MCF 10A (cell line): ENCODE measurements at regions of chr3 and their contacts with region 1.

Region 1: GRCh38 chr3:97821810-97822775 is at the start of gene CRYBG3:
- DNase-seq: peak; percentile 78
- H3K4me3 Mint-ChIP-seq: peak within 1 kb of the TSS; percentile 91
- H3K27ac Mint-ChIP-seq: peak within 1 kb of the TSS; percentile 81
- H3K4me1 Mint-ChIP-seq: peaks cover 22% of the 10 kb centered on the region
- H3K27me3 Mint-ChIP-seq: no peaks in the 10 kb centered on the region
- CTCF ChIP-seq: no peak
- total RNA-seq, gene CRYBG3: 7.2 and 10.7 TPM in 2 replicates

Region 2: DNA sequence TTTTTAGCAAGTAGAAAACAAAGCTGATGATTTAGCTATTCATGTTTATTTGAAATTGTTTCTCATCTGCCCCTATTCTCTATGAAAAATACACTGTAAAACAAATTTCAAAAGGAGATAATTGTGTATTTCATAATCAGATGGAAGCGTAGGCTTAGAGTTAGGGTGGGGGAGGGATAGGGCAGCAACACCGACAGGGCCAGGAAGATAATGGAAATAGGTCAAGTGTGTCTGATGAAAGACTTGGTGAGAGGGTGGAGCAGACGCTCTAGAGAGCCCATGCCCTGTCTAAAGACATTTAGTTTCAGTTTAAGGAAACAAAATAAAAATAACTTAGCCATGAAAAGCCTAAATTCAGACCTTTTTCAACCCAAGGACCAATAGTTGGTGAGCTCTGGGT is 109.2 kb before region 1 on chr3:
- CTCF ChIA-PET with region 1: no interaction called
- POLR2A ChIA-PET with region 1: no interaction called
- intact Hi-C with region 1: no loop called
- DNase-seq: no peak
- H3K4me3 Mint-ChIP-seq: no peak overlapping the region
- H3K27ac Mint-ChIP-seq: no peak overlapping the region
- H3K4me1 Mint-ChIP-seq: peaks cover 6% of the 10 kb centered on the region
- H3K27me3 Mint-ChIP-seq: peaks cover 11% of the 10 kb centered on the region
- CTCF ChIP-seq: no peak

Region 3: DNA sequence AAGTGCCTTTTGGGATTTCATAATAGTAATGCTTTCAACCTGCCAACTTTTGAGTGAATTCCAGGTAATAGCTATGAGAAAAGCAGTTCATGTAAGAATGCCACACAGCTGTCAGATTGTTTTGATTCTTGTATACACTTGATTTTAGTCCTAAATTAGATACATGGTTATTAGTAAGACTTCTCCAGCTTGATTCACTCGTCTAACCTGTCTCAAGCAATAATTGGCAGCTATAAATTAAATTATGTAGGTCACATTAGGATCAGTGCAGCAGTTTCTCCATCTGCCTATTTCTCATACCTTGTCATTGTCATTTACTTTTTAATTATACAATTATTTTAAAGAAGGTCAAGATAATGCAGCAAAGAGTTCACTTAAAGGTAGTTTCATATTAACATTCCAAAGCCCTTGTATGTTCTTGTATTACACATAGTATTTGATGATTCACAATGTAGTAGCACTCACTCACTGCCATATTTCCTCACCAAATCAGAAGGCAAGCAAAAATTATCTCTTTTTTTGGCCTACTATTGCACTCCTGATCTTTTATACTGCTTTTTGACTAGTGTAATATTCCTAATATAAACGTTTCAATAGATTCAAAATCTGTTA is 11.2 kb before region 1 on chr3:
- CTCF ChIA-PET with region 1: no interaction called
- POLR2A ChIA-PET with region 1: interaction called, 33 read pairs
- intact Hi-C with region 1: no loop called
- DNase-seq: peak; percentile 20
- H3K4me3 Mint-ChIP-seq: no peak overlapping the region
- H3K27ac Mint-ChIP-seq: no peak overlapping the region
- H3K4me1 Mint-ChIP-seq: peaks cover 13% of the 10 kb centered on the region
- H3K27me3 Mint-ChIP-seq: no peaks in the 10 kb centered on the region
- CTCF ChIP-seq: no peak

Region 4: DNA sequence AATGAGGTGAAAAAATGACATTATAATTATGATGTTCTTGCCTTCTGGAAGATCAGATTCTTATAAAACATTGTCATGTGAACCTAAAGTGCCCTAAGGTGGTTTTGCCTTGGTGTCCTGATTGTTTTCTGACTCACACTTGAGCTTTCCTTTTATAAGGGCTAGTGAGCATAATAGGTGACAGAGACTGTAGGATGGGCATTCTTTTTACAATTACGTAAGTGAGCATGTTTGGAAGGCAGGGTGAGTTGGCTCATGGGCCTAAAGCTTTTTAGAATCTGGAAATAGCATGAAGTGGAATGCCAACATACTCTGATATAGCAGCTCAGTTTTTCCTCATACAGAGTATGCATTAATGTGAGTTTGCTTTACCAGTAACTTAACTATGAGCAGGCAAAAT is 40.9 kb after region 1 on chr3:
- CTCF ChIA-PET with region 1: interaction called, 9 read pairs
- POLR2A ChIA-PET with region 1: interaction called, 23 read pairs
- intact Hi-C with region 1: no loop called
- DNase-seq: peak; percentile 51
- H3K4me3 Mint-ChIP-seq: no peak overlapping the region
- H3K27ac Mint-ChIP-seq: no peak overlapping the region
- H3K4me1 Mint-ChIP-seq: peaks cover 19% of the 10 kb centered on the region
- H3K27me3 Mint-ChIP-seq: no peaks in the 10 kb centered on the region
- CTCF ChIP-seq: no peak

Region 5: DNA sequence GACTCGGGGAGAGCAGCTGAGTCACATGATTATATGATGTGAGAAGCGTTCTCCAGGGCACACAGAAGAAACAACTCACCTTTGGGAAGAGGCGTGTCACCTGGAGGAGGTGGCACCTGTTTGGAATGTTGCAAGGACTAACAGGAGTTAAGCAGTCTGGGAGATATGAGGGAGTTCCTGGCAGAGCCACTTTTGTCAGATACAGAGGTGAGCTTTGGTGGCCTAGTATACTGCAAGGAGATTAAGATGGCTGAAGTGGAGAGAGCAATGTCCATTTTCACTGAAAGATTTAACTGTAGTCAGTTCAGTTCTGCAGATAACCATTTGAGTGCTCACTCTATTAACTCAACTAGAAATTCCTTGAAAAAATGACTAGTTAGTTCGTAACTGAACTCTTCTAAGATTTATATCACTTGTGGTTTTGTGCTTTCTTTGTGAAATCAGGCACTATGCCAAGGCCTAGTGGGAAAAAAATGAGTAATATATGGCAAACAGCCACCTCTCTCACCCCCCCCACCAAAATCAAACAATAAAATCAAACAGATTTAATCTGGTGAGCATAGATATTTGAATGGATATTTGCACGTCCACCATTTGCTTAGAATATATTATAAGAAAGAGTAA is 61.0 kb after region 1 on chr3:
- CTCF ChIA-PET with region 1: interaction called, 4 read pairs
- POLR2A ChIA-PET with region 1: interaction called, 11 read pairs
- intact Hi-C with region 1: no loop called
- DNase-seq: peak; percentile 80
- H3K4me3 Mint-ChIP-seq: peak overlapping the region; percentile 5
- H3K27ac Mint-ChIP-seq: peak overlapping the region; percentile 5
- H3K4me1 Mint-ChIP-seq: peaks cover 20% of the 10 kb centered on the region
- H3K27me3 Mint-ChIP-seq: no peaks in the 10 kb centered on the region
- CTCF ChIP-seq: no peak

Region 6: GRCh38 chr3:97971677-97972567 is 149.8 kb after region 1 on chr3 and contains the start of gene RIOX2:
- CTCF ChIA-PET with region 1: interaction called, 4 read pairs
- POLR2A ChIA-PET with region 1: interaction called, 23 read pairs
- intact Hi-C with region 1: loop called (anchors 1 kb)
- DNase-seq: peak; percentile 69
- H3K4me3 Mint-ChIP-seq: peak within 1 kb of the TSS; percentile 77
- H3K27ac Mint-ChIP-seq: peak within 1 kb of the TSS; percentile 25
- H3K4me1 Mint-ChIP-seq: peaks cover 25% of the 10 kb centered on the region
- H3K27me3 Mint-ChIP-seq: no peaks in the 10 kb centered on the region
- CTCF ChIP-seq: no peak
- total RNA-seq, gene RIOX2: 51.8 and 73.9 TPM in 2 replicates